ENCODE measurements at regions of chr4 and their contacts with region 1.

Region 1: GRCh38 chr4:85747882-85748491 is 273.0 kb downstream of the ARHGAP24 start:
- DNase-seq: peak; percentile 73
- H3K4me3 Mint-ChIP-seq: no peak overlapping the region
- H3K27ac Mint-ChIP-seq: no peak overlapping the region
- H3K4me1 Mint-ChIP-seq: peaks cover 26% of the 10 kb centered on the region
- H3K27me3 Mint-ChIP-seq: no peaks in the 10 kb centered on the region
- CTCF ChIP-seq: peak; percentile 78

Region 2: GRCh38 chr4:85147439-85148076 is 600.4 kb before region 1 on chr4:
- CTCF ChIA-PET with region 1: interaction called, 128 read pairs
- POLR2A ChIA-PET with region 1: interaction called, 26 read pairs
- intact Hi-C with region 1: loop called (anchors 1 kb)
- DNase-seq: peak; percentile 74
- H3K4me3 Mint-ChIP-seq: no peak overlapping the region
- H3K27ac Mint-ChIP-seq: no peak overlapping the region
- H3K4me1 Mint-ChIP-seq: peaks cover 11% of the 10 kb centered on the region
- H3K27me3 Mint-ChIP-seq: no peaks in the 10 kb centered on the region
- CTCF ChIP-seq: peak; percentile 68

Region 3: GRCh38 chr4:85370430-85371032 is 377.5 kb before region 1 on chr4:
- CTCF ChIA-PET with region 1: interaction called, 19 read pairs
- POLR2A ChIA-PET with region 1: interaction called, 3 read pairs
- intact Hi-C with region 1: loop called (anchors 1 kb)
- DNase-seq: peak; percentile 68
- H3K4me3 Mint-ChIP-seq: no peak overlapping the region
- H3K27ac Mint-ChIP-seq: no peak overlapping the region
- H3K4me1 Mint-ChIP-seq: no peaks in the 10 kb centered on the region
- H3K27me3 Mint-ChIP-seq: no peaks in the 10 kb centered on the region
- CTCF ChIP-seq: peak; percentile 84

Region 4: DNA sequence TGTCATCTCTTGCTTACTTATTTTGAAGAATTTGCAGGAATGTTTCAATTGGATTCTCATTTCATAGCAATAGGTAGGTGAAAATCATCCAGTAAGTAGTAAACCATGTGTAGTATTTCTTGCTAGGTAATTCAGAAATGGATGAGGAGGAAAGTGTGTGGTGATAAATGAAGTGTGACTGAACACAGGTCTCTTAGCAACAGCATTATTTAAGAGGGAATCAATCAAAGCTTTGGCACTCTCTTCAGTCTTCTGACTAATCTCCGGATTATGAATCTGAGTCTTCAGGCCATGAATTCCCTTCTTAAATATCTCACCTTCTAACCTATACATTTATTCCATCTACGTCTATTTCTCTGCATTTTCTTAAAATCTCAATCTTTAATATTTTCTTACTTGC is 328.9 kb before region 1 on chr4:
- CTCF ChIA-PET with region 1: no interaction called
- POLR2A ChIA-PET with region 1: no interaction called
- intact Hi-C with region 1: loop called (anchors 5 kb)
- DNase-seq: no peak
- H3K4me3 Mint-ChIP-seq: no peak overlapping the region
- H3K27ac Mint-ChIP-seq: no peak overlapping the region
- H3K4me1 Mint-ChIP-seq: no peaks in the 10 kb centered on the region
- H3K27me3 Mint-ChIP-seq: no peaks in the 10 kb centered on the region
- CTCF ChIP-seq: no peak

Region 5: DNA sequence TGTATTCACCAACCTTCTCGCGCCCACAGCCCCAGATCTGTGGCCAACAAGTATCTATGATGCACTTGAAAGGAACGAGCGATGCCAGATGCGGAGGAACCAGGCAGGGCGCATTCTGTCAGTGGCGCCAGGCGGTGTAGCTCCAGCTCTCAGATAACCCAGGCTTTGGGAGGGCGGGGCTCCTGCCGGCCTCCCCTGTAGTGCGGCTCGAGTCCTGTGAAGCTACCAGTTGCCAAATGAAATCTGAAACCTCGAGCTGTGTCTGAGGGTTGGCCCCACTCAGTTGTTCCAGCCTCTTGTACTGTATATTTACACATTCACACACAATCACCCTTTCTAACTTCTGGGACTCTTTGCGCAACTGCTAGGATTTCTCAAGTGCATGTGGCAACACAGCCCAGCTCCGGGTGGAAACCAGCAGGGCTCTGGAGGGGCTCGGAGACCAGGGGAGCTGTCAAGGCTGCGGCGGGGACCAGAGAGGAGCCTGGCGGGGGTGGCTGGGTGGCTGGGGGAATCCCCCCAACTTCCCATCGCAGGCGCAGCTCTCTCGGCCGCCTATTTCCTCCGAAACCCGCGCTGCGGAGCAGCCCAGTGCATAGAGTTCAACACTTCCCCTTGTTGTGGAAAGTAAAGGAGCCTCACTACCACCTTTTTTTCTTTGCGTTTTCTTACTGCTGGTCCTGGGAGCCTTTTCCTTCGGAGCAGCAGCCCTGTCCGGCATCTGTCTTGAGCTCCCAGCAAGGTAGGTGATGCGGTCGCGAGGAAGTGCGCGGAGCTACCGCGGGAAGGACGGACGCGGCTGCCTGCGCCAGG is 273.0 kb before region 1 on chr4 and contains the start of gene ARHGAP24:
- CTCF ChIA-PET with region 1: interaction called, 8 read pairs
- POLR2A ChIA-PET with region 1: interaction called, 14 read pairs
- intact Hi-C with region 1: loop called (anchors 1 kb)
- DNase-seq: peak; percentile 99
- H3K4me3 Mint-ChIP-seq: peak within 1 kb of the TSS; percentile 88
- H3K27ac Mint-ChIP-seq: peak within 1 kb of the TSS; percentile 81
- H3K4me1 Mint-ChIP-seq: peaks cover 18% of the 10 kb centered on the region
- H3K27me3 Mint-ChIP-seq: no peaks in the 10 kb centered on the region
- CTCF ChIP-seq: no peak
- total RNA-seq, gene ARHGAP24: 2.6 and 3.2 TPM in 2 replicates

Region 6: GRCh38 chr4:85543832-85544231 is 204.2 kb before region 1 on chr4:
- CTCF ChIA-PET with region 1: no interaction called
- POLR2A ChIA-PET with region 1: no interaction called
- intact Hi-C with region 1: loop called (anchors 10 kb)
- DNase-seq: peak; percentile 11
- H3K4me3 Mint-ChIP-seq: no peak overlapping the region
- H3K27ac Mint-ChIP-seq: no peak overlapping the region
- H3K4me1 Mint-ChIP-seq: peaks cover 11% of the 10 kb centered on the region
- H3K27me3 Mint-ChIP-seq: no peaks in the 10 kb centered on the region
- CTCF ChIP-seq: no peak